Left lung (tissue), 14 donors: ENCODE measurements at regions of chr12 and their contacts with region 1.

Region 1: DNA sequence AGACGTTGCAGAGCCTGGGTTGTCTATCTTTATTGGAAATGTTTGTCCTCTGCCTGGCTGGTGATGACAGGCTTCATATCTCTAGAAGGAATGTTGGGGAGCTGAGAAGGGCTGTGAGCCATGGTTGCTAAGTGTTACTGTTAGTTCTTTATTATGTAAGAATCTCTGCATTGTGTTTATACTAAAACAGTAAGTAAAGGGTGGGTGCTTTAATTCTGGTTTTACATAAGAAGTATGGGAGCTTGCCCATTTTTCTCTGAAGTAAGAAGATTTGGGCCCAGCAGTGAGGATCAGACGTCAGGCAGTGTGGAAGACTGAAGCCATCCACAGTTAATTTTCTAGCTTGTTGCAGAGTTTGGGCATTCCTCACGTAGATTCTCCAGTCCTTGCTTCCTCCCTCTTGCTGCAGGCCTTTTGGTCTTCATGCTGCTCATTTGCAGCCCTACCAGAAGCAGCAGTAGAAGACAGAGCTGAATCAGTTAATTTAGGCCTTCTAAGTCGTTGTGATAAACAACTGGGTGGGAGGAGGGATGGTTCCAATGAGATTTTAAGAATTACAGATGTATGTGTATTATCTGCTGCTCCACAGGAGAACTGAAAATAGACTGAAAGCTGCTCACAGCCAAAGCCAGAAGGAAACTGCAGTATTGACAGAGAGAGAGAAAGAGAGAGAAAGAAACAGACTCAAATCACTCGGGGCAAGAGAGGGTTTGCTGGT is 21.4 kb downstream of the WNT5B start:
- DNase-seq: peak in 1 of 4 donors; percentile 72
- ATAC-seq: no peak
- H3K4me3 ChIP-seq: no peak overlapping the region
- H3K27ac ChIP-seq: no peak overlapping the region
- H3K4me1 ChIP-seq: peaks cover 0 to 8% of the 10 kb centered on the region in 2 donors
- H3K27me3 ChIP-seq: no peaks in the 10 kb centered on the region
- CTCF ChIP-seq: no peak

Region 2: GRCh38 chr12:1429980-1430379 is 220.4 kb before region 1 on chr12:
- intact Hi-C with region 1: no loop called
- DNase-seq: no peak
- ATAC-seq: peak; percentile 46
- H3K4me3 ChIP-seq: no peak overlapping the region
- H3K27ac ChIP-seq: no peak overlapping the region
- H3K4me1 ChIP-seq: peaks cover 0 to 2% of the 10 kb centered on the region in 2 donors
- H3K27me3 ChIP-seq: no peaks in the 10 kb centered on the region
- CTCF ChIP-seq: no peak

Region 3: DNA sequence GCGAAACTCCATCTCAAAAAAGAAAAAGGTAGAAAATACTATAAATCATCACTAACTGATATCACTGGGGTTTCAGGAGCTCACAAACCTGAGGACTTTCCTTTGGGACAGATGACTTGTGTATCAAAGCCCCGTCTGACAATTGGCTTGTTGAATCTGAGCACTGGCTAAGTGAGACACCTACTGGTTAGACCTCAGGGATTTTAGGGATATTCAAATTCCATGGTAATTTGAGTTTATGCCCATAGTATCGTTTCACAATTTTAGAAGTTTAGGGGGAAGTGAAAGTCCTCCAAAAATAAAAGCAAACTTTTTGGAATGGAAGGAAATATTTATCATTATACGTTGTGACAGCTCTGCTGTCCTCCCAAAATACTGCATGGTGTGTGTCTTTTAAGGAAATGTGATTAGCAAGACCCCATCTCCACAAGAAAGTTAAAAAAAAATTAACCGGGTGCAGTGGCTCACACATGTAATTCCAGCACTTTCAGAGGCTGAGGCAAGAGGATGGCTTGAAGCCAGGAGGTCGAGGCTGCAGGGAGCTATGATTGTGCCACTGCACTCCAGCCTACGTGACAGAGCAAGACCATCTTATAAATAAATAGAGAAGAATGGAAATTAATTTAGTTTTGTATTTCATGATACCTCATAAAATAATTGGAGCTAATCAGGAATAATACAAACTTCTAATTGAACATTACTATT is 105.3 kb before region 1 on chr12:
- intact Hi-C with region 1: no loop called
- DNase-seq: no peak
- ATAC-seq: peak; percentile 69
- H3K4me3 ChIP-seq: no peak overlapping the region
- H3K27ac ChIP-seq: no peak overlapping the region
- H3K4me1 ChIP-seq: no peaks in the 10 kb centered on the region
- H3K27me3 ChIP-seq: peaks cover 0 to 5% of the 10 kb centered on the region in 2 donors
- CTCF ChIP-seq: no peak

Region 4: GRCh38 chr12:1690578-1691122 is 40.2 kb after region 1 on chr12 and contains the start of gene ADIPOR2:
- intact Hi-C with region 1: no loop called
- DNase-seq: peak; percentile 95 to 98 (median 96)
- ATAC-seq: peak; percentile 99
- H3K4me3 ChIP-seq: peak within 1 kb of the TSS; percentile 87 to 93
- H3K27ac ChIP-seq: peak within 1 kb of the TSS; percentile 94 to 97
- H3K4me1 ChIP-seq: peaks cover 5 to 46% of the 10 kb centered on the region in 2 donors
- H3K27me3 ChIP-seq: no peaks in the 10 kb centered on the region
- CTCF ChIP-seq: no peak
- polyA plus RNA-seq, gene ADIPOR2: 37.0 to 42.7 (median 40.7) TPM

Region 5: DNA sequence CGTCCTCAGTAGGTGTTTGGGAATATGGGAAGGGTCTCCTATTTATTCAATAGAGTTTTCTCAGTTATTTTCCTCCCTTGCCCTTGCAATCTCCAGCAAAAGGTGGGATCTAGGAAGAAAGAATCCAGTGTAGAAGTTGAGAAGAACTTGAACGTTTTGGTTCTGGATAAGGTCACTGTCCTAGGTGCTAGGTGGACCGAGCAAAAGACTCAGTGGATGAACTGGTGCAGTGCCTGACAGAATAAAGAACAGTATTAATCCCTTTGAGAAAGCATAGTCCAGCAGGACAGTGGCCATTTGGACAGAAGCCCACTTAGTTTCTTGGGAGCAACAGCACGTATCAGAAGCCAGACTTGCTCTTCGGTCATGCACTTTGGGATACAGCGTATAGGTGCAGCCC is 137.3 kb after region 1 on chr12:
- intact Hi-C with region 1: loop called (anchors 5 to 10 kb)
- DNase-seq: no peak
- ATAC-seq: no peak
- H3K4me3 ChIP-seq: no peak overlapping the region
- H3K27ac ChIP-seq: no peak overlapping the region
- H3K4me1 ChIP-seq: peaks cover 0 to 5% of the 10 kb centered on the region in 2 donors
- H3K27me3 ChIP-seq: no peaks in the 10 kb centered on the region
- CTCF ChIP-seq: no peak

Region 6: DNA sequence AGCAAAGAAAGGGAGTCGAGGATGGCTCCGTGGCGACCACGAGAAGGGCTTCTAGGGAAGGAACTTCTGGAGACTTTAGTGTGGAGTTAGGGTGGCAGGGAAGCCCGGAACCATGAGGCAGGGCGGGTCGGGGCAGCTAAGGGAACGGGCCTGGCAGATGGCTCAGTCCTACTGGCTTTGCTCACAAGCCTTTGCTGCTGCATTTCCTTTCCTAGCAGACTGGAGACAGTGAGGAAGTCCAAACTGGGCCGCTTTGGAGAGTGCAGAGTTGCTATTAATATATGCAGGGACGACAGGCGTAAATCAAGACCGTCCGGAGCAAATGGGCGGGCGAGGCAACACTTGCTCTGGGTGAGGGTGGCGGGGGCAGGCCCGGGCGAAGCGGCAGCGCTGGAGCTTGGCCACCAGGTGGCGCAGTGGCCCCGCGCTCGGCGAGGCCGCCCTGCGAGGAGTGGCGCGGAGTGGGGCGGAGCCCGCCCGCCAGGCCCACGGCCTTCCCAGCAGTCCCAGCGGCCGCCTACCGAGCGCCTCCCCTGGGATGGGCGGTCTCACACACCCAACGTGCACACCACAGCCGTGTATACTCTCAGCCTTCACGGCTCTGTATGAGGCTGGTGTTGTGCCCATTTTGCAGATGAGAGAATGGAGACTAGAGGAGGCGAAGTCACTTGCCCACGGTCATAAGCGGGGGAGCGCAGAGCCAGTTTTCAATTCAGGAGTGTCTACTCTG is 145.5 kb after region 1 on chr12:
- intact Hi-C with region 1: loop called in 1 of 2 experiments (anchors 10 kb)
- DNase-seq: peak; percentile 87 to 100 (median 95)
- ATAC-seq: peak; percentile 97
- H3K4me3 ChIP-seq: peak overlapping the region; percentile 68 to 80
- H3K27ac ChIP-seq: peak overlapping the region; percentile 83 to 97
- H3K4me1 ChIP-seq: peaks cover 0 to 34% of the 10 kb centered on the region in 2 donors
- H3K27me3 ChIP-seq: no peaks in the 10 kb centered on the region
- CTCF ChIP-seq: peak; percentile 99 to 100

Region 7: DNA sequence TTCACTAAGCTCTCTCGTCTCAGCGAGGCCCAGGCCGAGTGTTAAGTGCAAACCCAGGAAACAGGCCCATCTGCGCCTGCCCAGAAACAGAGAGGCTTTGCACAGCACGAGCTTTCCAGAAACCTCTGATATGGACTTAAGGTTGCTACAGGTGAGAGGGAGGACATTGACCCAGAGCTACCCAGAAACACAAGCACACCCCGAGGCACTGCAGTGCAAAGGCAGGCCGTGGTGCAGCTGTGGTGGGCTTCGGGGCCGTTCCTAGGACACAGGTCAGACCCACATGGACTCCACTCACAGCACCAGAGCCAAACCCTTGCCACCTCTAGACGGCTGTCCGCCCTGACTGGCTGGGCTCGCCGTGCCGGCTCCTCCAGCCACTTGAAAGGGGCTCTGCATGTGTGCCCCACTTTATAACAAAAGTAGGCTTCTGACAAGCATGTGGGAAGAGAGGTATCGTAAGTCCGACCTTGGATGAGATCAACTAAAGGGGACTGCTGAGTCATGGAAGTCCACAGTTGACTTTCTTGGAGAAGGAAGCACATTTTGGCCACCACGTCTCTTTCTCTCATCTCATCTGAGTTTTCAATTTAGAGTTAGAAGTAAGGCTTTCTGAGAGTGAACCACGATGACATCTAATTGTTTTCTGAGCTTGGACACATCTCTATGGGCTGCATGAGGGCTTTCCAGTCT is 229.9 kb after region 1 on chr12:
- intact Hi-C with region 1: no loop called
- DNase-seq: no peak
- ATAC-seq: no peak
- H3K4me3 ChIP-seq: no peak overlapping the region
- H3K27ac ChIP-seq: no peak overlapping the region
- H3K4me1 ChIP-seq: no peaks in the 10 kb centered on the region
- H3K27me3 ChIP-seq: peaks cover 0 to 11% of the 10 kb centered on the region in 2 donors
- CTCF ChIP-seq: no peak